HEK293T (cell line): ENCODE measurements at regions of chr5 and their contacts with region 1.

Region 1: GRCh38 chr5:113474100-113474728 is 14.0 kb downstream of the MCC start:
- DNase-seq: no peak

Region 2: GRCh38 chr5:113463032-113463431 is 11.2 kb before region 1 on chr5:
- CTCF ChIA-PET with region 1: no interaction called
- POLR2A ChIA-PET with region 1: no interaction called
- DNase-seq: no peak

Region 3: DNA sequence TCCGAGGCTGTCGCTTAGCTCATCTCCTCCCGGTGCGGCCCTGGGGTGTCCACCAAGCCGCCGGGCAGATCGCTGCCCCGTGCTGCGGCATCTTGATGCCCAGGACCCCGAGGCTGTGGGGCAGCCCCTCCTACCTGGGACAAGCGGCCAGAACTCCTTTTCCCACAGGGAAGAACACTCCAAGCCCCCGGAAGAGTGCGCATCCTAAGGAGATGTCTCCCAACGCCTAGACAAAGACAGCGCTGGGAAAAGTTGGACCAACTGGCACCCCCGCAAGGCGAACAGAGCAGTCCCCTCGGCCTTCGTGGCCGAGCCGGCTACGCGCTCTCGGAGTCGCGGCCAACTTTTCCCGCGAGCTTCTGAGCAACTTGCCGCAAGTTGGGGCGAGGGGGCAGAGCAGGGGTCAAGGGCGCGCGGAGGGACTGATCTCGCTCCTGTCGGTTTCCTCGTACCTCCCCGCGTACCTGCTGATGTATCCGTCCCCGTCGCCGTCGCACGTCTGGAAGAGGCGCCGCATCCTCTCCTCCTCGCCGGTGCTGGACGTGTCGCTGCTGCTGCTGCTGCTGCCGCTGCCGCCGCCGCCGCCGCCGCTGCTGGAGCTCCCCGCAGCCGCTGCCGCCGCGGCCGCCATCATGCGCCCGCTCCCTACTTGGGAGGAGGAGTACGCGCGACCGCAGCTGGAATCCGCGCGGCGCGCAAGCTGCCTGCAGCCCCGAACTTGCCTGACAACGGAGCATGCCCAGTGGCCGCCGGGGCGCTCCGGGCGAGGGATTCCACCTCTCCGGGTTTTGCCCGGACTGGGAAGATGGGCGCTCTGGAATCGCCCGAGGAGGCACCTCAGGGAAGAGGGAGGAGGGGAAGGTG is 13.8 kb after region 1 on chr5 and contains the start of gene MCC:
- CTCF ChIA-PET with region 1: no interaction called
- POLR2A ChIA-PET with region 1: interaction called, 13 read pairs
- DNase-seq: peak; percentile 85